ENCODE measurements at regions of chr2 and their contacts with region 1.

Region 1: DNA sequence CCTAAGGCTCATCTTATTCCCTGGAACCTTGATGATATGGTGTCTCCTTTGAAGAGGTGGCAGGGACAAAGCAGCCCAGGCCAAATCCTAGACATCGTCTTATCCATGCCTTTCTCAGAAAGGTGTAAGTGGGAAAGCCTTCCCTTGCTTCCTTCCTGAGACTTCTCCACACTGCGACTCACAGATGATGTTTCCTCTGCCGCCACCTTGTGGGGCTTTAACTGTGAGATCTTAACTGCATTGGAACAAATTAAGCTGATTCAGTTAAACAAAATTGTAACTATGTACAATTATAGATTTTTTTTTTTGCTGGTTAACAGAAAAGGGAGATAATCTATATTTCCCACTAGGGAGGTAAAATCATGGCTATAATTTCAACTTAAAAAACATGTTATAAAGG is 10.0 kb upstream of the GCA start:
- DNase-seq: peak in 10 of 35 experiments; percentile 4 to 56 (median 13)
- ATAC-seq: peak in 2 of 4 experiments; percentile 44 to 66
- H3K4me3 ChIP-seq: no peak overlapping the region
- H3K4me3 Mint-ChIP-seq: no peak overlapping the region
- H3K27ac ChIP-seq: no peak overlapping the region
- H3K27ac Mint-ChIP-seq: no peak overlapping the region
- H3K4me1 ChIP-seq: no peaks in the 10 kb centered on the region
- H3K4me1 Mint-ChIP-seq: no peaks in the 10 kb centered on the region
- H3K27me3 ChIP-seq: no peaks in the 10 kb centered on the region
- H3K27me3 Mint-ChIP-seq: no peaks in the 10 kb centered on the region

Region 2: DNA sequence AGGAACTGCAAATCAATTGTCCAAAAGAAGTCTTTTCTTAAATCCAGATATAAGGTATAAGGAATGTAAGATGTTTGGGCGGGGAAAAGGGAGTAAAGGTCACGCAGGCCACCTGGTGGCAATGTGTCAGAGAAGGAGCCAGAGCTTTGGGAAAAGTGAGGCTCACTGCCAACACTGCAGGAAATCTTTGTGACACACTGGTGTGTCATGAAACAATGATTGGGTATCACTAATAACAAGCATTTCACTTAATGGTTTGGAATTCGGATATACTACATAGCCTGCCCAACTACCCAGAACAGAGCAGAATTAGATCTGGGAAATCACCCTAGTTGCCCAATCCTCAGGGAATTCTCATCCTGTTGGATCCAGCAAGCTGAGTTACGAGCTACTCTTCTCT is 1901.3 kb before region 1 on chr2:
- CTCF ChIA-PET with region 1: no interaction called
- POLR2A ChIA-PET with region 1: no interaction called
- DNase-seq: no peak
- ATAC-seq: no peak
- H3K4me3 ChIP-seq: no peak overlapping the region
- H3K4me3 Mint-ChIP-seq: no peak overlapping the region
- H3K27ac ChIP-seq: no peak overlapping the region
- H3K27ac Mint-ChIP-seq: peak overlapping the region; percentile 1 to 76
- H3K4me1 ChIP-seq: peaks cover 16 to 46% of the 10 kb centered on the region in 2 experiments
- H3K4me1 Mint-ChIP-seq: peaks cover 60 to 73% (median 67%) of the 10 kb centered on the region in 3 donors
- H3K27me3 ChIP-seq: no peaks in the 10 kb centered on the region
- H3K27me3 Mint-ChIP-seq: no peaks in the 10 kb centered on the region

Region 3: GRCh38 chr2:162230761-162231160 is 103.2 kb before region 1 on chr2:
- CTCF ChIA-PET with region 1: no interaction called
- POLR2A ChIA-PET with region 1: no interaction called
- DNase-seq: no peak
- ATAC-seq: no peak
- H3K4me3 ChIP-seq: no peak overlapping the region
- H3K4me3 Mint-ChIP-seq: no peak overlapping the region
- H3K27ac ChIP-seq: no peak overlapping the region
- H3K27ac Mint-ChIP-seq: no peak overlapping the region
- H3K4me1 ChIP-seq: no peaks in the 10 kb centered on the region
- H3K4me1 Mint-ChIP-seq: no peaks in the 10 kb centered on the region
- H3K27me3 ChIP-seq: no peaks in the 10 kb centered on the region
- H3K27me3 Mint-ChIP-seq: peaks cover 7 to 14% of the 10 kb centered on the region in 2 donors

Region 4: DNA sequence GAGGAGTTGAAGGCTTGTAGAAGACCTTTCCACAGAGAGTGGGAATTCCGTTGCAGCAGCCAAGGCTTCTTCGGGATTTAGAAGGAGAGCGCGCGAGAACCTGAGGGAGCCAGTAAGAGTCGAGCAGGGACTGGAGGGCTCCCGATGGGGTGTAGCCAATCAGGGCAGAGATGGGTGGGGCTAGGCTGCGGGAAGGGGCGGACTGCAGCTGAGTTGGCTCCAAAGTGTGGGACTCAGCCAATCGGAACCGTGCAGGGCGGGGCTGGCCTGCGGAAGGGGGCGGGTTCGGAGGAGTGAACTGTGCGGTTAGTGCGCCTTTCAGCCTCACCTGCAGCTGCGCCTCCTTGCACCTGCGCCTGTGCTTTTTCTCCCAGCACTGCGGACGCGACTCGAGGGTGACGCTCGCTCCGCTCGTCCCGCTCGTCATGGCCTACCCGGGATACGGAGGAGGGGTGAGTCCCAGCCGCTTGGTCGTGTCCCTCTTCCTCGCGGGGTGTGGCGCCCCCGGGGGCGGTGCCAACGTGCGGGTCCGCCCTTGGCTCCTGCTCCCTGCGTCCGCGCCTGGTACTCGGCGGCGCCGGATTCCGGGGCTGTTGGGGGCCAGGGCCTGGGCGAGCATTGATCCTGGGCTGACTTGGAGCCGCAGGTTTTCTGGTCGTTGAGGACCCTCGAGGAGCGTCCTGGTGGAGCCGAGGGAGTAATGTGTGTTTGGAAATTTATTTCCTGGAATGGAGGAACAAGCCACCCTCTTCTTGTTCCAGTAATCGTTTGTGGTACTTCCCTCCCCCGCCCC is 10.1 kb after region 1 on chr2 and contains the start of gene GCA:
- CTCF ChIA-PET with region 1: interaction called, 5 to 12 read pairs
- POLR2A ChIA-PET with region 1: no interaction called
- DNase-seq: peak; percentile 95 to 100 (median 98)
- ATAC-seq: peak; percentile 96 to 99 (median 98)
- H3K4me3 ChIP-seq: peak within 1 kb of the TSS; percentile 75 to 84
- H3K4me3 Mint-ChIP-seq: peak within 1 kb of the TSS; percentile 89 to 90 (median 89)
- H3K27ac ChIP-seq: no peak within 1 kb of the TSS
- H3K27ac Mint-ChIP-seq: peak within 1 kb of the TSS; percentile 68 to 74
- H3K4me1 ChIP-seq: peaks cover 8 to 9% of the 10 kb centered on the region in 2 experiments
- H3K4me1 Mint-ChIP-seq: peaks cover 14 to 22% (median 21%) of the 10 kb centered on the region in 3 donors
- H3K27me3 ChIP-seq: no peaks in the 10 kb centered on the region
- H3K27me3 Mint-ChIP-seq: no peaks in the 10 kb centered on the region
- total RNA-seq, gene GCA: 6.5 to 12.8 (median 10.0) TPM

Region 5: GRCh38 chr2:162422891-162423290 is 88.9 kb after region 1 on chr2:
- CTCF ChIA-PET with region 1: no interaction called
- POLR2A ChIA-PET with region 1: no interaction called
- DNase-seq: no peak
- ATAC-seq: no peak
- H3K4me3 ChIP-seq: no peak overlapping the region
- H3K4me3 Mint-ChIP-seq: no peak overlapping the region
- H3K27ac ChIP-seq: no peak overlapping the region
- H3K27ac Mint-ChIP-seq: no peak overlapping the region
- H3K4me1 ChIP-seq: no peaks in the 10 kb centered on the region
- H3K4me1 Mint-ChIP-seq: no peaks in the 10 kb centered on the region
- H3K27me3 ChIP-seq: no peaks in the 10 kb centered on the region
- H3K27me3 Mint-ChIP-seq: peaks cover 1 to 16% of the 10 kb centered on the region in 2 donors

Region 6: GRCh38 chr2:162773352-162773751 is 439.4 kb after region 1 on chr2:
- CTCF ChIA-PET with region 1: no interaction called
- POLR2A ChIA-PET with region 1: no interaction called
- DNase-seq: no peak
- ATAC-seq: no peak
- H3K4me3 ChIP-seq: no peak overlapping the region
- H3K4me3 Mint-ChIP-seq: no peak overlapping the region
- H3K27ac ChIP-seq: no peak overlapping the region
- H3K27ac Mint-ChIP-seq: no peak overlapping the region
- H3K4me1 ChIP-seq: no peaks in the 10 kb centered on the region
- H3K4me1 Mint-ChIP-seq: no peaks in the 10 kb centered on the region
- H3K27me3 ChIP-seq: no peaks in the 10 kb centered on the region
- H3K27me3 Mint-ChIP-seq: no peaks in the 10 kb centered on the region